ENCODE measurements at regions of chr6 and their contacts with region 1.

Region 1: GRCh38 chr6:7238900-7239589 is 74.0 kb downstream of the SSR1 start:
- DNase-seq: peak; percentile 86
- H3K4me3 Mint-ChIP-seq: no peak overlapping the region
- H3K27ac Mint-ChIP-seq: no peak overlapping the region
- H3K4me1 Mint-ChIP-seq: peaks cover 20% of the 10 kb centered on the region
- H3K27me3 Mint-ChIP-seq: no peaks in the 10 kb centered on the region

Region 2: DNA sequence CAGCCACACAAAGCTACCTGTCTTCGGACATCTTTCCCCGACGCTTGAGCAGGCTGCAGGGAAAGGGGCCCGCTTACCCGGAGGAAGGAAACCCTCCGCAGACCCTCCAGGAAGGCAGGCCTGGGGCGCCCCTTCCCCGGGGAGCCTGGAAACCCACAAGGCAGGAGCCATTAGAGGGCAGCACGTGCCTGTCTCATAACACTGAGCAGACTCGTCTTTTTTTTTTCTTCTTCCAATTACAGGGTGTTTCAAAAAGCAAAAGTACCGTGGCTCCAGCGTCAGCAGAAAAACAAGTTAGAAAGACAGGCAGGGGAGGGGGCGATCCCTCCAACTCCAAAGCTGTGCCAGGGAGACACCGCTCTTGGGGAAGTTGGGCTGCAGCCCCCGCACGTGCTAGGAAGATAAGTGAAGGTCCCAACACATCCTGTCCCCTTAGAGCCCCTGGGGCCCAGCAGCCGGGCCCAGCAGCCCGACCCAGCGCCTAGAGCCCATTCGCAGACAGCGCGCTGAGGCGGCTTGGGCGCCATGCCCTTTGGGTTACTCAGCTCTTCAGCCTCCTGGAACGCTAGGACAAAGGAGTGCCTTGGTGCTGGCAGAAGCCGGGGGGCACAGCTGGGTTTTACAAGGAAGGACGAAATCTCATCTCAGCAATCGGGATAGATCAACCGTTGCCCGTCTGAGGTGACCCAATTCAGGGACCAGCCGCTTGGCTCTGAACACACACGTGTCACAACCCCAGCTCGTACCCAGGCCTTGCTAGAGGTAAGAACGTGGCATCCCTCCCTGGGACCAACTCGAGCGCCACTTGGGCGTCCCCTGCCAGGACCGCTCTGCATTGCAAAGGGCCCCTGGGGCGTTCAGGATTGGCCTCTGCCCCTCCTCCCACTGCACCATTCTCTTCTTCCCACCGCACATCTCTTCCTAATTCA is 514.2 kb before region 1 on chr6:
- CTCF ChIA-PET with region 1: interaction called, 16 read pairs
- POLR2A ChIA-PET with region 1: no interaction called
- intact Hi-C with region 1: loop called (anchors 1 kb)
- DNase-seq: peak; percentile 67
- H3K4me3 Mint-ChIP-seq: no peak overlapping the region
- H3K27ac Mint-ChIP-seq: no peak overlapping the region
- H3K4me1 Mint-ChIP-seq: peaks cover 4% of the 10 kb centered on the region
- H3K27me3 Mint-ChIP-seq: peaks cover 8% of the 10 kb centered on the region

Region 3: GRCh38 chr6:6788394-6789020 is 450.5 kb before region 1 on chr6:
- CTCF ChIA-PET with region 1: interaction called, 7 read pairs
- POLR2A ChIA-PET with region 1: no interaction called
- intact Hi-C with region 1: loop called (anchors 2 kb)
- DNase-seq: peak; percentile 48
- H3K4me3 Mint-ChIP-seq: no peak overlapping the region
- H3K27ac Mint-ChIP-seq: no peak overlapping the region
- H3K4me1 Mint-ChIP-seq: no peaks in the 10 kb centered on the region
- H3K27me3 Mint-ChIP-seq: no peaks in the 10 kb centered on the region

Region 4: GRCh38 chr6:7224731-7225130 is 14.3 kb before region 1 on chr6:
- CTCF ChIA-PET with region 1: interaction called, 11 read pairs
- POLR2A ChIA-PET with region 1: no interaction called
- intact Hi-C with region 1: no loop called
- DNase-seq: no peak
- H3K4me3 Mint-ChIP-seq: no peak overlapping the region
- H3K27ac Mint-ChIP-seq: no peak overlapping the region
- H3K4me1 Mint-ChIP-seq: no peaks in the 10 kb centered on the region
- H3K27me3 Mint-ChIP-seq: no peaks in the 10 kb centered on the region